ENCODE measurements at regions of chr2 and their contacts with region 1.

Region 1: DNA sequence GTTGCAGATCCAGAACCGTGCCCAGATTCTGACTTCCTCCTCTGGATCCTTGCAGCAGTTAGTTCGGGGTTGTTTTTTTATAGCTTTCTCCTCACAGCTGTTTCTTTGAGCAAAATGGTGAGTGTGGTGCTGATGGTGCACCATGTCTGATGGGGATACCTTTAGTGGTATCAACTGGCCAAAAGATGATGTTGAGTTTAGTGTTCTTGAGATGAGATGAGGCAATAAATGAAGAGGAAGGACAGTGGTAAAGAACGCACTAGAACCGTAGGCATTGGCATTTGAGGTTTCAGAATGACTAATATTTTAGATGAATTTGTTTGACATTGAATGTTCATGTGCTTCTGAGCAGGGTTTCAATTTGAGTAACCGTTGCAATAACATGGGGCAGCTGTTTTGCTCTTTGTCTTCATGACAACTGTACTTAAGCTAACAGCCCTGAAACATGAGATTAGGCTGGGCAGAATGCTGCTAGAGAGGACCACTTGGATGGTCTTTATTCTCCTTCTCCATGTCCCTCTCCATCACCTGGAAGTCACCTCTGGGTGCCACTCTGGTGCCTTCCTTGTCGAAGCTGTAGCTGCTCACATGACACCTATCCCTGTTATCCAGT is 3.9 kb downstream of the CTLA4 start:
- DNase-seq: peak; percentile 66
- H3K4me3 Mint-ChIP-seq: peak overlapping the region; percentile 96
- H3K27ac Mint-ChIP-seq: peak overlapping the region; percentile 99
- H3K4me1 Mint-ChIP-seq: peaks cover 78% of the 10 kb centered on the region
- H3K27me3 Mint-ChIP-seq: no peaks in the 10 kb centered on the region

Region 2: DNA sequence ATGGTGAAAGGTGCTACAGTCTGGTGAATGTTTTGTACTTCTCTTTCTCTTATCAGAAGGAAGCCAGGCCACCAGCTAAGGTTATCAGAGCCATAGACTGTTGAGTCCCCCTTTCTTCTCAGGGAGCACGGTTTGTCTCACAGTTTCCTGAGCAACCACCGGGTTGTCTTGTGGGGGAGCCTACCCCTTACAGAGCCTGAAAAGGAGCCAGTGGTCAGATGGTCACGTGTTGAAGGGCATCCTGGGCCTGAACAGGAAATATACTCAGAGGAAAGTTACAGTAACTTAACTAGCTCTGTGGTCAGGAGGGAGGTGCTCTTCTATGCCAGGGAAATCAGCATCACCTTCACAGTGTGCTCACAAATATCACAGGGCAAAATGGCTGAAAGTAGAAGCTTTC is 153.4 kb before region 1 on chr2:
- CTCF ChIA-PET with region 1: interaction called, 3 read pairs
- POLR2A ChIA-PET with region 1: interaction called, 105 read pairs
- DNase-seq: peak; percentile 80
- H3K4me3 Mint-ChIP-seq: peak overlapping the region; percentile 50
- H3K27ac Mint-ChIP-seq: peak overlapping the region; percentile 93
- H3K4me1 Mint-ChIP-seq: peaks cover 99% of the 10 kb centered on the region
- H3K27me3 Mint-ChIP-seq: no peaks in the 10 kb centered on the region

Region 3: GRCh38 chr2:203740780-203741281 is 130.6 kb before region 1 on chr2:
- CTCF ChIA-PET with region 1: interaction called, 3 read pairs
- POLR2A ChIA-PET with region 1: interaction called, 65 read pairs
- DNase-seq: peak; percentile 51
- H3K4me3 Mint-ChIP-seq: peak overlapping the region; percentile 57
- H3K27ac Mint-ChIP-seq: peak overlapping the region; percentile 95
- H3K4me1 Mint-ChIP-seq: peaks cover 82% of the 10 kb centered on the region
- H3K27me3 Mint-ChIP-seq: no peaks in the 10 kb centered on the region

Region 4: GRCh38 chr2:203804070-203804469 is 67.4 kb before region 1 on chr2:
- CTCF ChIA-PET with region 1: interaction called, 3 read pairs
- POLR2A ChIA-PET with region 1: interaction called, 129 read pairs
- DNase-seq: peak; percentile 38
- H3K4me3 Mint-ChIP-seq: no peak overlapping the region
- H3K27ac Mint-ChIP-seq: peak overlapping the region; percentile 38
- H3K4me1 Mint-ChIP-seq: peaks cover 68% of the 10 kb centered on the region
- H3K27me3 Mint-ChIP-seq: no peaks in the 10 kb centered on the region

Region 5: DNA sequence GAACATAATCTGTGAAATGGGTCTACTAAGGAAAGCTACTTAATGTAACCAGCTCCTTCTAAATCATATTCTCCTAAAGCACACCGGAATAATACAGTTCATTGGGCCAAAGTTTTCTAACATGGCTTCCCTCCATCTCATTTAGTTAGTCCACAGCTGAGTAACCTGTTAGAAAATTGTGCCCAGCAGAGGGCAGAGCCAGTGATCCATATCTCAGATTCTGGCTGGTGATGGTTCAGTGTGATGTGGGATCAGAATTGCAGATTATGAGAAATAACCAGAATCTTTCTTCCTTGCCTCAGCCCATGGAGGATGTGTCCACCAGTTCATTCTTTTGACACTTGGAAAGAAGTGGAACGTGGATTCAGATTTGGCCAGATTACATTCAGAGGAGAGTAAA is 13.3 kb before region 1 on chr2:
- CTCF ChIA-PET with region 1: interaction called, 24 read pairs
- POLR2A ChIA-PET with region 1: interaction called, 298 read pairs
- DNase-seq: peak; percentile 44
- H3K4me3 Mint-ChIP-seq: no peak overlapping the region
- H3K27ac Mint-ChIP-seq: peak overlapping the region; percentile 94
- H3K4me1 Mint-ChIP-seq: peaks cover 77% of the 10 kb centered on the region
- H3K27me3 Mint-ChIP-seq: no peaks in the 10 kb centered on the region

Region 6: DNA sequence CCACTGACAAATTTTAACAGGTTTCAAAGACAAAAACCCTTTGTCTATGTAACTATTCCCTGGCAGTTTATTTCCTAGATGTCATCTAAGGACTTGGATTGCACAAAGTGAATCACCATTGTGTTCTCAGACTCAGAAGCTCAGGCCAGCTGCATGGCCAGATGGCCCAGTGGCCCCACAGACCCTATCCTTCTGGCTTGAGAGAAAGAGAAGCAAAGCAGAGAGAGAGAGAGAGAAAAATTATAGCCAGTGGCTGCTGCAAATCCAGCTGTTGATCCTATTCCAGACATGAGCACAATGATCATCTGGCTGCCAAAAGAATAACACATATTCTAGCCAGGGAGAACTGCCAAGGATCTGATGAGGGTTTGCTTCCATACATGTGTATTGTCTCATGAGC is 21.9 kb after region 1 on chr2:
- CTCF ChIA-PET with region 1: interaction called, 7 read pairs
- POLR2A ChIA-PET with region 1: interaction called, 593 read pairs
- DNase-seq: no peak
- H3K4me3 Mint-ChIP-seq: no peak overlapping the region
- H3K27ac Mint-ChIP-seq: peak overlapping the region; percentile 72
- H3K4me1 Mint-ChIP-seq: peaks cover 86% of the 10 kb centered on the region
- H3K27me3 Mint-ChIP-seq: no peaks in the 10 kb centered on the region

Region 7: GRCh38 chr2:203934041-203934492 is 62.6 kb after region 1 on chr2:
- CTCF ChIA-PET with region 1: interaction called, 3 read pairs
- POLR2A ChIA-PET with region 1: interaction called, 150 read pairs
- DNase-seq: peak; percentile 52
- H3K4me3 Mint-ChIP-seq: peak overlapping the region; percentile 47
- H3K27ac Mint-ChIP-seq: peak overlapping the region; percentile 86
- H3K4me1 Mint-ChIP-seq: peaks cover 41% of the 10 kb centered on the region
- H3K27me3 Mint-ChIP-seq: no peaks in the 10 kb centered on the region

Measured in activated CD4-positive, alpha-beta memory T cell treated with anti-CD3 and anti-CD28 coated beads, Interleukin-2, amount 10 ng/mL, durations not matched to agents 7 days and 5 days (primary cell).